Esophagus muscularis mucosa (tissue), 4 donors: ENCODE measurements at regions of chr11 and their contacts with region 1.

Region 1: DNA sequence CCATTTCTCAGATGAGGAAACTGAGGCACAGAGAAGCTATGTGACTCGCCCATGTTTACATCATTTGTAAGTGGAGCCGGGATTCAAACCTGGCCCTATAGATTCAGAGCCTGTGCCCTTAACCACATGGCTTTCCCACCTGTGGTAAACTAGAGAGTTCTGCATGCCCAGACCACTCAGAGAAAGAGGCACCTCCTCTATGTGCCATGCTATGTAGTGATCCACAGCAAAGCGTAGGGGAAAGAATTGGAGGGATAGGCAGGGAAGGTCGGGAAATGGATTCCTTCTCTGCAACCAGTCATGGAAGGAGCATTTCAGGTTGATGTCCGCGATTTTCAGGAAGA is 15.4 kb upstream of the POU2AF2 start:
- DNase-seq: no peak
- H3K4me3 ChIP-seq: peak overlapping the region; percentile 43 to 64 (median 54)
- H3K27ac ChIP-seq: no peak overlapping the region
- H3K4me1 ChIP-seq: peaks cover 4 to 12% (median 5%) of the 10 kb centered on the region in 4 donors
- H3K27me3 ChIP-seq: peaks cover 0 to 3% (median 0%) of the 10 kb centered on the region in 4 donors
- CTCF ChIP-seq: no peak
- EP300 ChIP-seq: no peak
- POLR2A ChIP-seq: no peak

Region 2: DNA sequence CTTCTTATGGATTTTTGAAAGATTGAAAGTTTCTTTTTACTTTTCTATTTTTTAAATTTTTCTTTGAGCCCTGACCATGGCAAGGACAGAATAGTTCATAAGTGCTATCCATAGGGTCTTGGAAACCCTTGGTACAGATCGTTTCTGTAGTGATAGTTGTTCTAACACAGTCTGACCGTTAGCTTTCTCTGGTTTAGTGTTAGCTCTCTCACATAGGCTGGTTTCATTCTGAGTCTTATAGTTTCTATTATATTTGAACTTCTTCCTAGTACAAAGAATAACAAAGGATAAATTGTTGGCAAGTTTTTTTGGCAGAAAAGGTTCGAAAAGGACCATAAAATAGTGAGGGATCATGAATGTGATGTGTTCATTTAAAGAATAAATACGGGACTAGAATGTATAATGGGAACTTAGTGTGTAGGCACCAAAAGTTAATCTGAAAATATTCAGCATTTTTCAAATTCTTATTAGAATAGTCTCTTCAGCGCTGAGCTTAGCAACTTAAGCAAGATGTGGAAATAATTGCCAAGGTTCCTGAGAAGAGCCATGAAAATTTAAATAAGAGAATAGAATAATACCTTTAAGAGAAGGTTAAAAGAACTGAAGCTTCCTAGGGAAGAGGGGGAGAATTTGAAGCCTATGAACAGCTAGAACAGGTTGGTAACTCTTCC is 776.3 kb before region 1 on chr11:
- intact Hi-C with region 1: loop called (anchors 5 kb)
- DNase-seq: no peak
- H3K4me3 ChIP-seq: no peak overlapping the region
- H3K27ac ChIP-seq: no peak overlapping the region
- H3K4me1 ChIP-seq: peaks cover 0 to 24% (median 7%) of the 10 kb centered on the region in 4 donors
- H3K27me3 ChIP-seq: no peaks in the 10 kb centered on the region
- CTCF ChIP-seq: no peak
- EP300 ChIP-seq: no peak
- POLR2A ChIP-seq: no peak

Region 3: GRCh38 chr11:110711776-110712658 is 518.1 kb before region 1 on chr11 and contains the start of gene ARHGAP20:
- intact Hi-C with region 1: loop called (anchors 5 kb)
- DNase-seq: peak; percentile 93
- H3K4me3 ChIP-seq: peak within 1 kb of the TSS; percentile 66 to 87 (median 83)
- H3K27ac ChIP-seq: peak within 1 kb of the TSS; percentile 88 to 93 (median 90)
- H3K4me1 ChIP-seq: peaks cover 15 to 52% (median 29%) of the 10 kb centered on the region in 4 donors
- H3K27me3 ChIP-seq: no peaks in the 10 kb centered on the region
- CTCF ChIP-seq: no peak
- EP300 ChIP-seq: no peak
- POLR2A ChIP-seq: no peak
- total RNA-seq, gene ARHGAP20: 5.1 to 9.4 (median 6.9) TPM

Region 4: DNA sequence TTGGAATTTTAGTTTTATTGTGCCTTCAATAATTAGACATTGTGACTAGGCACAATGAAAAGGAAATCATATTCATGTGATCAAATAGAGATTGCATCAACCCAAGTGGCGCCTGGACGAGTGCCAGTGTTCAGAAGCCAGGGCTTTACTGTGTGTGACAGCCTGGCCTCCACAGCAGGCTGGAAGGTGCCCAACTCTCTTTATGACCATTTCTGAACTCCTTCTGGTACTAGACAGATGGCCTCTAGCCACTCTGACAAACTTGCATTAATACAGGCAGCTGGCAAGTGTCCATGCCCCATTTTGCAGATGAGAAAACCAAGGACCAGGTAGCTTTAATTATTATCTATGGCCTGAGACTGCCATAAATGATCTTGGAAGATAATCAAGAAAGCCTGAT is 157.3 kb after region 1 on chr11:
- intact Hi-C with region 1: no loop called
- DNase-seq: no peak
- H3K4me3 ChIP-seq: no peak overlapping the region
- H3K27ac ChIP-seq: no peak overlapping the region
- H3K4me1 ChIP-seq: no peaks in the 10 kb centered on the region
- H3K27me3 ChIP-seq: no peaks in the 10 kb centered on the region
- CTCF ChIP-seq: no peak
- EP300 ChIP-seq: no peak
- POLR2A ChIP-seq: no peak